ENCODE measurements at regions of chr15 and their contacts with region 1.

Region 1: GRCh38 chr15:34367101-34368081 is at the start of gene LPCAT4:
- DNase-seq: peak; percentile 98
- H3K4me3 ChIP-seq: peak within 1 kb of the TSS; percentile 74 to 99
- H3K27ac ChIP-seq: peak within 1 kb of the TSS; percentile 92 to 96
- H3K4me1 ChIP-seq: peaks cover 0 to 19% of the 10 kb centered on the region in 2 experiments; a peak in 1 of 4 replicates
- H3K27me3 ChIP-seq: no peaks in the 10 kb centered on the region
- CTCF ChIP-seq: peak; percentile 91
- EP300 ChIP-seq: no peak
- RAD21 ChIP-seq: peak; percentile 65
- polyA plus RNA-seq, gene LPCAT4: 78.6 and 88.4 TPM in 2 replicates

Region 2: DNA sequence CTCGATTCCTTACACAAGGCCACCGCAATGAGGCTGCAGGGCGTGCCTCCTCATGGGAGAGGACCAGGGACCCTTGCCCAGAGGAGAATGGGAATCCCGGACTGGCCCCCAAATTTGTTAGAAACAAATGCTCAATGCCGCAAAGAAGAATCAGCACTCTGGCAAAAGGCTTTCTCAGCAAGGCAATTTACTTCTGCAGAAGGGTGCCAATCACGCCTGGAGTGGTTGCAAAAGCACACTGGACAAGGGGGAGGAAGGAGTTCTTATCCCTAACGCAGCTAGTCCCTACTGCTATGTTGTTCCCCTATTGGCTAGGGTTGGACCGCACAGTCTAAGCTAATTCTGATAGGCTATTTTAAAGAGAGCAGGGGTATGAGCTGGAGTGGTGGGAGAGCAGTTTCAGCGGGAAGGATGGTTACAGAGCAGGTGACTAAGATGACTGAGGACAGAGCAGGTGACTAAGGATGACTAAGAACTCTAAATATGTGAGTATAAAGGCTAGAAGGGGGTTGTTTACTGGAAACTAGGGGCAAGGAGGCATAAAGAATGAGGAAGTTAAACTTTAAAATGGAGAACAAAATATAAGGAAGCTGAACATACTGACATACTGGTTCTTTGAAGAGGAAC is 205.9 kb before region 1 on chr15:
- CTCF ChIA-PET with region 1: no interaction called
- POLR2A ChIA-PET with region 1: no interaction called
- DNase-seq: no peak
- H3K4me3 ChIP-seq: no peak overlapping the region
- H3K27ac ChIP-seq: no peak overlapping the region
- H3K4me1 ChIP-seq: no peaks in the 10 kb centered on the region
- H3K27me3 ChIP-seq: no peaks in the 10 kb centered on the region
- CTCF ChIP-seq: no peak
- EP300 ChIP-seq: no peak
- RAD21 ChIP-seq: no peak

Region 3: GRCh38 chr15:34179234-34179633 is 188.2 kb before region 1 on chr15:
- CTCF ChIA-PET with region 1: no interaction called
- POLR2A ChIA-PET with region 1: no interaction called
- DNase-seq: no peak
- H3K4me3 ChIP-seq: no peak overlapping the region
- H3K27ac ChIP-seq: no peak overlapping the region
- H3K4me1 ChIP-seq: no peaks in the 10 kb centered on the region
- H3K27me3 ChIP-seq: no peaks in the 10 kb centered on the region
- CTCF ChIP-seq: no peak
- EP300 ChIP-seq: no peak
- RAD21 ChIP-seq: no peak

Region 4: DNA sequence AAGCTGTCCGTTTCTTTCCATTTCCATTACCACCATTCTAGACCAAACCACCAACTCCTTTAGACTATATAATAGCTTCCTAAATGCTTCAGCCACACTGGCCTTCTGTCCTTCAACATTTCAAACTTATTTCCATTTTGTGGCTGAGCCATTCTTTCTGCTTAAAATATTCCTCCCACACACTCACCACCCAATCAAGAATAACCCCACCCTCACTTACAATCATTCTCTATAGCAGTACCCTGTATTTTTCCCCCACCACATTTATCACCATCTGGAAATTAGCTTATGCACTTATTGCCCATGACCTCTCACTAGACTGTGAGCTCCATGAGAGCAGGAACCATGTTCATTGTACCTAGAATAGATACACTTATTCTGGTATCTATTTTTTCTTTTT is 164.1 kb before region 1 on chr15:
- CTCF ChIA-PET with region 1: no interaction called
- POLR2A ChIA-PET with region 1: no interaction called
- DNase-seq: no peak
- H3K4me3 ChIP-seq: no peak overlapping the region
- H3K27ac ChIP-seq: no peak overlapping the region
- H3K4me1 ChIP-seq: peaks cover 0 to 2% of the 10 kb centered on the region in 2 experiments; a peak in 1 of 4 replicates
- H3K27me3 ChIP-seq: no peaks in the 10 kb centered on the region
- CTCF ChIP-seq: no peak
- EP300 ChIP-seq: no peak
- RAD21 ChIP-seq: no peak

Region 5: DNA sequence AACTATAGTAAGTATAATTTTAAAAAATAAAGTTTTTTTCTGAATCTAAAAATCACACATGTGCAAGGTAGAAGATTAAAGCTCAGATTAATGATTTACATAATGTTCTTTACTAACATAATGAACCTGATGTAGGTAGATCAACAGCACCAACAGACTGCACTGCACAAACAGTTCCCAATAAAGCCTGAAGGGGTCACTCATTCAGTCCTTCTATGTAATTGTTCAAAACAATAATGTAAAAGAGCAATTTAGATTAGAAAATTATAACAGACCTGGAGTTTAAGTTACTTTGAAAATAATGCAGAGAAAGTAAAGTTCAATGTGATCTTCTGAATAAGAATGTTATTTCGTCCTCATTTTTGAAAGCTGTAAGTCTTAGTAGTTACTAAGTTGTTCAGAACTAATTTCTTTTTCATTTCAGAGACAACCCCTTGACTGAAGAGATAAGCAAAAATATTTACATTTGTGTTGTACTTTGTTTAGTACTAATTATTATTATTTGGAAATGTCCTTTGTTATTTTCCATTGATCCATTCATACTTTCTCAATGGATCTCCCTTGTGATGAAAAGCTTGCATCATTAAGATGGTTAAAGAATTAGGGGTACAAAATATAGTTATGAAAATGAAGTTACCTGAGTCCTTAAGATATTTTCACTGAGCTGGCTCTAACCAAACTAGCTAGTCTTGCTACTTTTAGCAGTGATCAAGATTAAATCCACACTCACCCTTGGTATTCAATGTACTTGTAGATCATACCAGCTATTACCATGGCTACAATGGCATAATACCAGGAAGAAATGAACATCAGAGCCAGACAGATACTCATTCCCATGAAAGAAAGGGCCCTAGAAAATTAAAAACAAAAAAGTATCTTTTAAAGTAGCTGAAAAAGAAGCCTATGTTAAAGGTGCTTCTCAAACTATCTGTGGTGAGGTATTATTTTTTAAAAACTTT is 125.7 kb before region 1 on chr15:
- CTCF ChIA-PET with region 1: interaction called, 17 read pairs
- POLR2A ChIA-PET with region 1: no interaction called
- DNase-seq: peak; percentile 60
- H3K4me3 ChIP-seq: no peak overlapping the region
- H3K27ac ChIP-seq: peak overlapping the region in 1 of 2 experiments; percentile 97; a peak in 2 of 4 replicates
- H3K4me1 ChIP-seq: peaks cover 0 to 13% of the 10 kb centered on the region in 2 experiments; a peak in 2 of 4 replicates
- H3K27me3 ChIP-seq: no peaks in the 10 kb centered on the region
- CTCF ChIP-seq: peak; percentile 82
- EP300 ChIP-seq: no peak
- RAD21 ChIP-seq: peak; percentile 60

Region 6: DNA sequence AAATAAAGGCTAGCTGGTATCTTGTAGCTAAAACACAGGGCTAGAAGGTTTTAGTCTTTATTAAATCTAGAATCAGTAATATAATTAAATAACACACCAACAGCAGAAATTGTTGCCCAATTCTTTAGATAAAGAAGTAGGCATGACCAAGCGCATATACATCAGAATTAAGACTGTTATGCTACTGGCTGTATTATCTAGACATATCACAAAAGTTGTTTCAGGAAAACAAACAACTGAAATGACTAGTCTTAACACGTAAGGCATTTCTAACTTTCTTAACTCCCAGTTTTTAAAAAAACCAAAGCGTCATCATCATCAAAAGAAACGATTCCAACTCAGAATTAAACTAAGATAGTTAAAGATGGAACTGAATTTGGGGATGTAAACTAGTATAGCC is 87.2 kb before region 1 on chr15:
- CTCF ChIA-PET with region 1: interaction called, 10 read pairs
- POLR2A ChIA-PET with region 1: no interaction called
- DNase-seq: no peak
- H3K4me3 ChIP-seq: no peak overlapping the region
- H3K27ac ChIP-seq: no peak overlapping the region
- H3K4me1 ChIP-seq: no peaks in the 10 kb centered on the region
- H3K27me3 ChIP-seq: no peaks in the 10 kb centered on the region
- CTCF ChIP-seq: no peak
- EP300 ChIP-seq: no peak
- RAD21 ChIP-seq: no peak

Region 7: DNA sequence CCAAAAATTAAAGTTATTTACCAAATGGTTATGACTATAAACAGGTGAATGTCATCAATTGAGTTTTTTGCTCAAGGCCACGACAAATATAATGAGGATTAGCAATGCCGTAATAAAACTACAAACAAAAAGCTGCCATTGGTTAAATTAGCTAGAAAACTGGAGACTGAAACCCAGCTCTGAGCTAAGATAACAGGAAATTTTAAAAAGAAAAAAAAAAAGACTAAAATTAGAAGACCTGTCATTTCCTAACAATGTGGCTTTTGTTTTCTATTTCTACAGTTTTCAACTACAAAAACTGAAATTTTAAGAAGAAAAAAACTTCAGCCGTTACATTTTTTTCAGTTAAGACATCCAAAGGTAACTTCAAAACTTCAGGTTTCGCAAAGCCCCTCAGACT is 39.5 kb before region 1 on chr15:
- CTCF ChIA-PET with region 1: interaction called, 13 read pairs
- POLR2A ChIA-PET with region 1: no interaction called
- DNase-seq: no peak
- H3K4me3 ChIP-seq: no peak overlapping the region
- H3K27ac ChIP-seq: no peak overlapping the region
- H3K4me1 ChIP-seq: no peaks in the 10 kb centered on the region
- H3K27me3 ChIP-seq: no peaks in the 10 kb centered on the region
- CTCF ChIP-seq: no peak
- EP300 ChIP-seq: no peak
- RAD21 ChIP-seq: no peak

Region 8: GRCh38 chr15:34337557-34338306 is 29.7 kb before region 1 on chr15 and contains the start of gene SLC12A6:
- CTCF ChIA-PET with region 1: interaction called, 17 read pairs
- POLR2A ChIA-PET with region 1: interaction called, 19 read pairs
- DNase-seq: peak; percentile 96
- H3K4me3 ChIP-seq: peak within 1 kb of the TSS; percentile 87
- H3K27ac ChIP-seq: peak within 1 kb of the TSS; percentile 59 to 89
- H3K4me1 ChIP-seq: peaks cover 14 to 27% of the 10 kb centered on the region in 2 experiments; a peak in 3 of 4 replicates
- H3K27me3 ChIP-seq: no peaks in the 10 kb centered on the region
- CTCF ChIP-seq: no peak
- EP300 ChIP-seq: no peak
- RAD21 ChIP-seq: no peak
- polyA plus RNA-seq, gene SLC12A6: 7.7 and 8.0 TPM in 2 replicates

Region 9: GRCh38 chr15:34342737-34343575 is 24.4 kb before region 1 on chr15 and contains the starts of genes NOP10 and NUTM1:
- CTCF ChIA-PET with region 1: interaction called, 17 read pairs
- POLR2A ChIA-PET with region 1: interaction called, 19 read pairs
- DNase-seq: peak; percentile 79
- H3K4me3 ChIP-seq: peak within 1 kb of the TSS; percentile 59 to 99
- H3K27ac ChIP-seq: peak within 1 kb of the TSS; percentile 86 to 93
- H3K4me1 ChIP-seq: peaks cover 4 to 5% of the 10 kb centered on the region in 2 experiments; a peak in 3 of 4 replicates
- H3K27me3 ChIP-seq: no peaks in the 10 kb centered on the region
- CTCF ChIP-seq: peak; percentile 94
- EP300 ChIP-seq: peak; percentile 27 to 31; a peak in 2 of 4 replicates
- RAD21 ChIP-seq: peak; percentile 77
- polyA plus RNA-seq, gene NOP10: 440 and 583 TPM in 2 replicates
- polyA plus RNA-seq, gene NUTM1: not detected in 2 replicates

Measured in SK-N-SH (cell line).